Mammary epithelial cell (primary cell): ENCODE measurements at regions of chr1 and their contacts with region 1.

Region 1: GRCh38 chr1:79259388-79260336 is 253.1 kb upstream of the ADGRL4 start:
- DNase-seq: peak; percentile 12
- H3K4me3 ChIP-seq: no peak overlapping the region
- H3K27ac ChIP-seq: no peak overlapping the region
- H3K4me1 ChIP-seq: no peaks in the 10 kb centered on the region
- H3K27me3 ChIP-seq: peaks cover 2% of the 10 kb centered on the region
- CTCF ChIP-seq: peak; percentile 51 to 71

Region 2: GRCh38 chr1:78688701-78689100 is 571.0 kb before region 1 on chr1:
- CTCF ChIA-PET with region 1: no interaction called
- dilution Hi-C with region 1: no loop called
- in situ Hi-C with region 1: no loop called
- intact Hi-C with region 1: loop called (anchors 2 kb)
- DNase-seq: peak; percentile 29
- H3K4me3 ChIP-seq: no peak overlapping the region
- H3K27ac ChIP-seq: no peak overlapping the region
- H3K4me1 ChIP-seq: peaks cover 11% of the 10 kb centered on the region
- H3K27me3 ChIP-seq: no peaks in the 10 kb centered on the region
- CTCF ChIP-seq: peak in 1 of 2 donors; percentile 43

Region 3: GRCh38 chr1:78839704-78840277 is 419.9 kb before region 1 on chr1:
- CTCF ChIA-PET with region 1: no interaction called
- dilution Hi-C with region 1: no loop called
- in situ Hi-C with region 1: no loop called
- intact Hi-C with region 1: loop called (anchors 1 kb)
- DNase-seq: peak; percentile 20
- H3K4me3 ChIP-seq: no peak overlapping the region
- H3K27ac ChIP-seq: no peak overlapping the region
- H3K4me1 ChIP-seq: peaks cover 5% of the 10 kb centered on the region
- H3K27me3 ChIP-seq: no peaks in the 10 kb centered on the region
- CTCF ChIP-seq: peak; percentile 47 to 57

Region 4: DNA sequence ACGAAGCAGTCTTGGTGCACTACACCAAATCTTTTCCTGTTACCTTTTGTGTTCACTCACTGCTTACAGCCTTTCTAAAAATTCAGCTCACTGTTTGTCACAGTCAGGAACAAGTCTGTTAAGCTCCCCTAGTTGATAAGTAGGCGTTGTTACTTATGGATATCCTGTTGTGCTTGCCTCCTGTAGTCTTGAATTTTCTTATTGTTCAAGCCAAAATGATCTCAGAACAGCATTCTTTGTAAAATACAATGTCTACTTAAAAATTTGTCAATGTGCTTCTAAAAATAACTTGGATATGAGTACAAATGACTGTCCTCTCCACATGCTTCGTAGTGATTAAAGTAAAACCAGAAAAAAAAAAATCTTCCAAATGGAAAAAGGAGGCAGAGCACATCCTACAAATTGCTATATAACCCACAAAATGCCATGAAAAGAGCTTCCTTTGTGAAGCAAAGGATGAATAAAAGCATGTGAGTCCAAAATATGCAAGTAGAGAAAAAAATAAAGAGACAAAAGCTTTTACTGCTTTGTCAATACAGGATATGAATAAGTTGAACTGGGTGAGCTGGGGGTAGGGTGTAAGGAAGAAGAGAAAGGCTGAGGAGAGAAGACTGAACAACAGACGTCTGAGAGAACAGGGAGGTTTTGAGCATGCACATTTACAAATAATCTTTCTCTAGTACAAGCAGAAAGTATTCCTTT is 24.2 kb before region 1 on chr1:
- CTCF ChIA-PET with region 1: no interaction called
- dilution Hi-C with region 1: no loop called
- in situ Hi-C with region 1: no loop called
- intact Hi-C with region 1: no loop called
- DNase-seq: peak; percentile 2
- H3K4me3 ChIP-seq: no peak overlapping the region
- H3K27ac ChIP-seq: no peak overlapping the region
- H3K4me1 ChIP-seq: no peaks in the 10 kb centered on the region
- H3K27me3 ChIP-seq: no peaks in the 10 kb centered on the region
- CTCF ChIP-seq: no peak

Region 5: DNA sequence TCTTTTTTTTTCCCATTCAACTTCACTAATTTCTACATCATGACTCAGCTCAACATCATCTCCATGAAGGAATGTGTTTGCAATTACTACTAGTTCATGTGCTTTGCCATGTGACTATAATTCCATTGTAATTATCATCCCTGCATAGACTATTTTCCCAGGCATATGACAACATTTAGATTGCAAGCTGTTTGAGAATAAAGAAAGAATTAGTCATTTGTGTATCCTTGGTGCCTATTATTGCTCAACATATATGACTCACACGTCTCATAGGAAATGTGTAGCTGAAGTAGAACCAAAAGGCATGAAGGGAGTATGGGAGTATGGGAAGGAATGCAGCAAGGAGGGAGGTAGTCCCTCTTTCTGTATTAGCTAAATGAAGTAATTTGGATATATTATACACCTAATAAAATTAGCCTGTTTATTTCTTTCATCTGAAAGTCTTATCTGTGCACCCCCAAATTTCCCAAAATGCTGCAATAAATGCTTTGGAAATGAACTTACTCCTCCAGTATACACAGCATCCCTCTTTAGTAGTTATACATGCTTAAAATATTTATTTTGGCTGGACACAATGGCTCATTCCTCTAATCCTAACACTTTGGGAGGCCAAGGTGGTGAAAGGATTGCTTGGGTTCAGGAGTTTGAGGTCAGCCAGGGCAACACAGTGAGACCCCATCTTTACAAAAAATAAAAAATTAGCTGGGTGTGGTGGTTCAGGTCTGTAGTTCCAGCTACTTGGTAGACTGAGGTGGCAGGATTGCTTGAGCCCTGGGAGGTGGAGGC is 63.8 kb after region 1 on chr1:
- CTCF ChIA-PET with region 1: no interaction called
- dilution Hi-C with region 1: no loop called
- in situ Hi-C with region 1: no loop called
- intact Hi-C with region 1: loop called (anchors 2 kb)
- DNase-seq: peak; percentile 97
- H3K4me3 ChIP-seq: no peak overlapping the region
- H3K27ac ChIP-seq: peak overlapping the region; percentile 56
- H3K4me1 ChIP-seq: peaks cover 12% of the 10 kb centered on the region
- H3K27me3 ChIP-seq: no peaks in the 10 kb centered on the region
- CTCF ChIP-seq: no peak

Region 6: DNA sequence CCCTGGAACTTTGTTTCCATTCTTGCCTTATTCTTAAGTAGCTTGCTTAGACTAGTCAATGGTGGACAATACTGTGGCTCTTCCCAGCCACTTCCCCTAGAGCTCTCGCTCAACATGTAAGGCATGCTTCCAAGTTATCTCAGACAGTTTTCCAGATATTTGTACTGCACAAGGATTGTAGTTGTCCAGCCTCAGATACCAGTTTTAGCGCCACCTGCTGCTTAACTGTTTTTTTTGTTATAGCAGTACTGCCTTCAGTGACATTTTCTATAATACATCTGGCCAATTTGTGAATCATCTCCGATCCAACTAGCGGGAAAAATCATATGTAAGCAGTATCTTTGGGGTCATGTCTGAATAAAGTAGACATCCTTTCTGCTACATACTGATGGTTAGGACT is 93.6 kb after region 1 on chr1:
- CTCF ChIA-PET with region 1: interaction called, 6 read pairs
- dilution Hi-C with region 1: no loop called
- in situ Hi-C with region 1: loop called (anchors 5 to 10 kb)
- intact Hi-C with region 1: loop called (anchors 1 kb)
- DNase-seq: peak; percentile 36
- H3K4me3 ChIP-seq: no peak overlapping the region
- H3K27ac ChIP-seq: no peak overlapping the region
- H3K4me1 ChIP-seq: no peaks in the 10 kb centered on the region
- H3K27me3 ChIP-seq: peaks cover 4% of the 10 kb centered on the region
- CTCF ChIP-seq: peak; percentile 60

Region 7: DNA sequence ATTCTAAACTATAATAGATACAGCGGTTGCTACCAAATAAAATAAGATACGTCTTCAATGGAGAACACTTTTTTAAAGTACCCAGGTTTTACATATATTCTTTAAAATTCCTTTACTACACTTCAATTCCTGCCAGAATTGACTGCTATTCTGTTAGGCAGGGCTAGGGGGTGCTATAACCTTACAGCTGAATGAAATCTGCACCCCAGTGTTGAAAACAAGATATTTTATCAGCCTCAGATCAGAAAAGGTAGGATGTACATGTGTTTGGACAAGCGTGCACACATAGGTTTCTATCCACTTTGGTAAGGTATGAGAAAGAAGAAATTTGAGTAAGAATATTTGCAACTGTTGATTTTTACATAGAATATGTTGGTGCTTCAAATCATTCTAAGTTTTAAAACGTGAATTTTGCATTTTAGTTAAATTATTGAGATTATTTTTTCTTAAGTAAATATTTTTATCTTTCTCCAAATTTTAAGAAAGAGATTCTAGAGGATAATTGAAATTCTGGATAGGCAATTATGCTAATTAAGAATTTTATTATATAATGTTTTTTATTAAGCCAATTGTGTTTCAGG is 237.6 kb after region 1 on chr1:
- CTCF ChIA-PET with region 1: no interaction called
- dilution Hi-C with region 1: no loop called
- in situ Hi-C with region 1: no loop called
- intact Hi-C with region 1: loop called (anchors 10 kb)
- DNase-seq: peak; percentile 6
- H3K4me3 ChIP-seq: no peak overlapping the region
- H3K27ac ChIP-seq: no peak overlapping the region
- H3K4me1 ChIP-seq: no peaks in the 10 kb centered on the region
- H3K27me3 ChIP-seq: peaks cover 4% of the 10 kb centered on the region
- CTCF ChIP-seq: peak; percentile 96